HEK293 (cell line): ENCODE measurements at regions of chr1 and their contacts with region 1.

Region 1: DNA sequence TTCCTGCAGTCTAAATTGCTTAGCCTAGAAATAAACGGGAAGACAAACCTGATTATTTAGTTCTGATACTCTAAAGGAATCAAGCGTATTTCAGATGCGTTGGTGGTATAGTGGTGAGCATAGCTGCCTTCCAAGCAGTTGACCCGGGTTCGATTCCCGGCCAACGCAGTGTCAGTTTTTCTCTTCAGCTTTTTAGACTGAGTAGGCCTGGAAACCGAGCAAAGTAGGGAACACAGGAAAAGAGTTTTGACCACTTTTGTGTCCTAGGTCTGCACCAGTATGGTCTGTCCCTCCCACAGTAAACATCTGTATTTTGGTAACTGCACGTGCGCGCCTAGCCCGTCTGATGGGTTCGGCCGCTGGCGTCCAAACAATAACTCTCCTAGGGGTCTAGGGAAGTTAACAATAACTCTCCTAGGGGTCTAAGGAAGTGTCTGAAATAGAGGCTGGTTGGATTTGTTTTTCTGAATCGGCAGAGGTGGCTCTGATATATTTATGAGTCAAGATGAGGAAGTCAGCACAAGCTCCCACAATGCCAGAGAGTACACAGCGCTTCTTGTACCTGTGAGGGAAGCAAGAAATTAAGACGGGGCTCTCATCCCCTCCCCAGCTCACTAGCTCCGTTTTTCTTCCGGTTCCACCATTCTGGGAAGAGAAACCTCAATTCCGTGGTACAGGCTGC is 15.6 kb upstream of the HJV start:
- H3K4me3 ChIP-seq: peak overlapping the region; percentile 74
- H3K27ac ChIP-seq: peak overlapping the region; percentile 86
- H3K4me1 ChIP-seq: no peaks in the 10 kb centered on the region
- CTCF ChIP-seq: no peak

Region 2: GRCh38 chr1:146019231-146020057 is 17.7 kb before region 1 on chr1:
- CTCF ChIA-PET with region 1: interaction called, 16 read pairs
- POLR2A ChIA-PET with region 1: interaction called, 5 read pairs
- H3K4me3 ChIP-seq: no peak overlapping the region
- H3K27ac ChIP-seq: no peak overlapping the region
- H3K4me1 ChIP-seq: no peaks in the 10 kb centered on the region
- CTCF ChIP-seq: no peak

Region 3: GRCh38 chr1:146049436-146049835 is 12.3 kb after region 1 on chr1:
- CTCF ChIA-PET with region 1: interaction called, 6 read pairs
- POLR2A ChIA-PET with region 1: interaction called, 82 read pairs
- H3K4me3 ChIP-seq: no peak overlapping the region
- H3K27ac ChIP-seq: no peak overlapping the region
- H3K4me1 ChIP-seq: no peaks in the 10 kb centered on the region
- CTCF ChIP-seq: no peak